ENCODE measurements at regions of chr19 and their contacts with region 1.

Region 1: DNA sequence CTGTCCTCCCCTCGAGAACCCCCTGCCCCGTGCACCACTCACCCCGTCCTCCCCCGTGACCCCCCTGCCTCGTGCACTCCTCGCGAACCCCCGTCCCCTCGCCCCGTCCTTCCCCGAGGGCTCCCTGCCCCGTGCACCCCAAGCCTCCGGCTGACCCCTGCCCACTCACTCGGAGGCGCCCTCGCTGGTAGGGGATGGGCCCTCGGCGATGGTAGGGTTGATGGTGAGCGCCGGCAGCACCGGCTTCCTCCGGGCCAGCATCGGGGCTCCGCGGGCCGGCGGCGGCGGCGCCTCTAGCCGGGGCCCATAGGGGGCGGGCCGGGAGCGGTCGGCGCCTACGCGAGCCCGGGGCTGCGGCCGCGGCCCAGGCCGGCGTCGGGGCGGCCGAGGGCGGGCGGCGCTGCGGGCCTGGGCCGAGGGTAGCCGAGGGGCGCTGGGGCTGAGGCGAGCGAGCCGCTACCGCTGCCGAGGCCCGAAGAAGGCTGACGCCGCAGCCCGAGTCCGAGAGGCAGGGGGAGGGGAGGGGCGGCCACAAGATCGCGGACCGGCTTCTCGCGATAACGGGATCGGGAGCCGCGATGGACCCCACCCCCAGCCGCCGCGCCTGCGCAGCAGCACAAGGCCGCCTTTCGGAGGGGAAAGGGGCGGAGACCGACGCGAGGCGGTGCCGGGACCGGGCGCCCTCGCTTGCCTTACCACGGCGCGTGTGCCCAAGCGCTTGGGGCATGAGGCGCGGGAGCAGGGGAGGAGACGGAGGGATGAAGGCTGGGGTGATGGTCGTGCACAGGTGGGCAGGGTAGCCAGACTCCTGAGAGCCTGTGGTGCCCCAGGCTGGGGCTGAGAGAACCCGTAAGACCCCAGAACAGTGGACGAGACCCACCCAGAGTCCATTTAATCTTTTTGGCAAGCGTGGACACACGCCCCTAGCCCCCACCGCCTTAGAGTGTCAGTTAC is at the start of gene MAP2K2:
- DNase-seq: peak; percentile 90 to 92
- ATAC-seq: peak; percentile 95 to 97
- H3K4me3 ChIP-seq: peak within 1 kb of the TSS; percentile 78 to 98 (median 90)
- H3K27ac ChIP-seq: peak within 1 kb of the TSS; percentile 77 to 86 (median 82)
- H3K4me1 ChIP-seq: peaks cover 8 to 17% of the 10 kb centered on the region in 2 donors
- H3K27me3 ChIP-seq: no peaks in the 10 kb centered on the region
- CTCF ChIP-seq: peak in 3 of 5 experiments; percentile 5 to 33 (median 9)
- POLR2A ChIP-seq: peak; percentile 45 to 73
- total RNA-seq, gene MAP2K2: 101 to 207 (median 138) TPM

Region 2: GRCh38 chr19:4007021-4007835 is 116.7 kb before region 1 on chr19 and contains the start of gene PIAS4:
- in situ Hi-C with region 1: loop called in 1 of 4 experiments (anchors 25 kb)
- intact Hi-C with region 1: loop called (anchors 5 kb)
- DNase-seq: peak; percentile 92 to 95
- ATAC-seq: peak; percentile 84 to 92
- H3K4me3 ChIP-seq: peak within 1 kb of the TSS; percentile 75 to 94 (median 86)
- H3K27ac ChIP-seq: peak within 1 kb of the TSS; percentile 86 to 96 (median 88)
- H3K4me1 ChIP-seq: peaks cover 41 to 44% of the 10 kb centered on the region in 2 donors
- H3K27me3 ChIP-seq: no peaks in the 10 kb centered on the region
- CTCF ChIP-seq: peak in 2 of 5 experiments; percentile 51 to 69
- POLR2A ChIP-seq: peak in 1 of 2 donors; percentile 70
- total RNA-seq, gene PIAS4: 15.5 to 20.0 (median 17.5) TPM

Region 3: DNA sequence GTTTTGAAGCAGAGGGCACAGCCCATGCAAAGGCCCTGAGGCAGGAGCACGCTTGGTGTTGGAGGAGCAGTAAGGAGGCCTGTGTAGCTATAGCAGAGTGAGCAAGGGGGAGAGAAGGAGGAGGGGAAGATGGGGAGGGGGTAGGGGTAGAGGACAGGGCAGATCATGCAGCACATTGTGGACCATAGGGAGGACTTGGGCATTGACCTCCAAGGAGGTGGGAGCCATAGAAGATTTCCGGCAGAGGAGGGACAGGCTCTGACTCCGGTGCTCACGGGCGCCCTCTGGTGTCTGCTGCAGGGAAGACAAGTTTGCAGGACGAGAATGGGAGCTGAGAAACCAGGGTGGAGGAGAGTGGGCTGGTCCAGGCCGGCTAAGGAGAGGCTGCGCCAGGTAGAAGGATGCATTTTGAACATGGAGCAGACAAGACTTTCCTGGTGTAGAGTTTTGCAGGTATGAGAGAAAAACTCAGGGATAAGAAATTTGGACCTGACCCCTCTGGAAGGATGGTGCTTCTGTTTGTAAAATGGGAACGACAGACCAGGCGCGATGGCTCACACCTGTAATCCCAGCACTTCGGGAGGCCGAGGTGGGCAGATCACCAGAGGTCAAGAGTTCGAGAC is 15.8 kb after region 1 on chr19:
- in situ Hi-C with region 1: no loop called
- intact Hi-C with region 1: no loop called
- DNase-seq: peak; percentile 37 to 63
- ATAC-seq: peak; percentile 62 to 87
- H3K4me3 ChIP-seq: no peak overlapping the region
- H3K27ac ChIP-seq: no peak overlapping the region
- H3K4me1 ChIP-seq: peaks cover 0 to 4% of the 10 kb centered on the region in 2 donors
- H3K27me3 ChIP-seq: no peaks in the 10 kb centered on the region
- CTCF ChIP-seq: peak; percentile 42 to 85 (median 71)
- POLR2A ChIP-seq: no peak

Region 4: GRCh38 chr19:4246767-4247593 is 123.1 kb after region 1 on chr19 and contains the start of gene YJU2:
- in situ Hi-C with region 1: no loop called
- intact Hi-C with region 1: loop called (anchors 1 kb)
- DNase-seq: peak; percentile 98 to 99
- ATAC-seq: peak; percentile 99
- H3K4me3 ChIP-seq: peak within 1 kb of the TSS; percentile 57 to 87 (median 76)
- H3K27ac ChIP-seq: peak within 1 kb of the TSS; percentile 85 to 99 (median 95)
- H3K4me1 ChIP-seq: peaks cover 7 to 11% of the 10 kb centered on the region in 2 donors
- H3K27me3 ChIP-seq: peaks cover 0 to 3% (median 0%) of the 10 kb centered on the region in 3 donors
- CTCF ChIP-seq: peak in 4 of 5 experiments; percentile 23 to 38 (median 34)
- POLR2A ChIP-seq: peak; percentile 36 to 42
- total RNA-seq, gene YJU2: 13.5 to 37.8 (median 19.9) TPM

Region 5: DNA sequence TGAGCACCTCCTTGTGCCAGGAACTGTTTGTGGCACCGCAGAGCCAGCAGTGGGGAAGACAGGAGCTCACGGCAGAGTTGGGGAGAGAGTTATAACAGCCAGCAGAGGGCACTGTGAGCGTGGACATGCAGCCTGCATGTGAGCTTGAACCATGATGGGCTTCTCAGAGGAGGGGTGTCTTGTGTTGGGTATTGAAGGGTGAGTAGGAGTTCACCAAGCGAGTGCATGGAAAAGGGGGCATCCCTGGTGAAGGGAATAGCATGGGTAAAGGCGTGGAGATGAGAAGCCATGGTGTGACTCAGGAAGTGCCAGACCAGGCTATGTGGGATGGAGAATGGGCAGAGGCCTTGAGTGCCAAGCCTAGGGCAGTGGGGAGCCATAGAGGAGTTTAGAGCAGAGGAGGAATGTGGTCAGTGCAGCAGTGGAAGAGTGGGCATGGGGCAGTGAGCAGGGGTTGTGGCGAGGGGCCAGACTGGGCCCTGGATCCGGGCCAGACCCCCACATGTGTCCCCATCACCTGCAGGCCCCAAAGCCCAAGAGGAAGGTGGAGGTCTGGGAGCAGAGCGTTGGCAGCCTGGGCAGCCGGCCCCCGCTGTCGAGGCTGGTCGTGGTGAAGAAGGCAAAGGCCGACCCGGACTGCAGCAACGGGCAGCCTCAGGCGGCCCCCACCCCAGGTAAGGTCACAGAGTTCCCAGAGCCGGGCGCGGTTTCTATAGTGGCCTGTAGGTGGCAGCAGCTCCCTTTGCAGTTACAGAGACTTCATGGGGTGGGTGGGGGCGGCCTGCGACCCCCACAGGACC is 143.4 kb after region 1 on chr19:
- in situ Hi-C with region 1: no loop called
- intact Hi-C with region 1: no loop called
- DNase-seq: peak in 1 of 2 donors; percentile 7
- ATAC-seq: peak in 1 of 2 donors; percentile 44
- H3K4me3 ChIP-seq: no peak overlapping the region
- H3K27ac ChIP-seq: no peak overlapping the region
- H3K4me1 ChIP-seq: no peaks in the 10 kb centered on the region
- H3K27me3 ChIP-seq: no peaks in the 10 kb centered on the region
- CTCF ChIP-seq: peak; percentile 76 to 90 (median 78)
- POLR2A ChIP-seq: no peak

Measured in gastrocnemius medialis (tissue), 4 donors.